ENCODE measurements at regions of chr16 and their contacts with region 1.

Region 1: GRCh38 chr16:22188595-22189442 is 17.3 kb upstream of the EEF2K start:
- DNase-seq: peak; percentile 67
- ATAC-seq: no peak

Region 2: GRCh38 chr16:21946889-21947635 is 241.8 kb before region 1 on chr16:
- intact Hi-C with region 1: loop called in 1 of 2 experiments (anchors 10 kb)
- DNase-seq: no peak
- ATAC-seq: no peak

Region 3: DNA sequence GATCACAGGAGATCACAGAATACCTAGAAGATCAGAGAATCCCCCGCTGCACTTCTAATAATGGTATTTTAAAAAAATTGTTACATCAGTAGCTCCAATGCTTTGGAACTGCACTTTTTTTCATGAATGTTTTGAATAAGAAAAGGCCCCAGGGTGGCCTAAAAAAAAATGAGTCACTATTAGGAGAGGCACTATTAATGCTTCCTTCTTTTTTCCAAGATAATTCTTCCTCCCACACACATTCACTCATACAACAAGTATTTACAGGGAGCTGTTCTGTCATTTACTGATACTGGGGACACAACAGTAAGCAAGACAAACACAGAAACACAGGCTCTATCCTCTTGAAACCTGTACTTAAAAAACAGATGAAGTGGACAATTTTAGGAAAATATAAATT is 187.2 kb before region 1 on chr16:
- intact Hi-C with region 1: loop called (anchors 2 to 5 kb)
- DNase-seq: no peak
- ATAC-seq: peak in 1 of 2 donors; percentile 42

Region 4: GRCh38 chr16:22077700-22078313 is 111.0 kb before region 1 on chr16:
- intact Hi-C with region 1: loop called in 1 of 2 experiments (anchors 5 kb)
- DNase-seq: peak; percentile 48
- ATAC-seq: peak; percentile 42 to 59

Region 5: DNA sequence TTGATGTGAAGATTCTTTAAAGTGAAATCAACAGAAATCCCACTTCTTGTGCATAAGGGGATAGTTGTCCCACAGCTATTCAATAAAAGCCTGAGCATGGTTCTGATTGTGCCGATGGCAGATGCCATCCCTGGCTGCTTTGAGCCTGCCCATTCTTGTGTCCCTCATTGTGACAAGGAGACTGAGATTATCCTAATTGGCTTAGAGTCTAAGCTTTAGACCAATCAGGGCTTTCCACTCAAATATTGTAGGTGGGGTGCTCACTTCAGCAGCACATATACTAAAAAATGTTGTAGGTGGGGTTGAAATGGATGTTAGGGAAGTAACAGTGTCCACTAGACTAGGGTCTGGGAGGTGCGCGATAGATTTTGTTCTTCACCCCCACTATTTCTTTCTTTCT is 45.5 kb before region 1 on chr16:
- intact Hi-C with region 1: no loop called
- DNase-seq: no peak
- ATAC-seq: no peak